MCF 10A (cell line): ENCODE measurements at regions of chr1 and their contacts with region 1.

Region 1: DNA sequence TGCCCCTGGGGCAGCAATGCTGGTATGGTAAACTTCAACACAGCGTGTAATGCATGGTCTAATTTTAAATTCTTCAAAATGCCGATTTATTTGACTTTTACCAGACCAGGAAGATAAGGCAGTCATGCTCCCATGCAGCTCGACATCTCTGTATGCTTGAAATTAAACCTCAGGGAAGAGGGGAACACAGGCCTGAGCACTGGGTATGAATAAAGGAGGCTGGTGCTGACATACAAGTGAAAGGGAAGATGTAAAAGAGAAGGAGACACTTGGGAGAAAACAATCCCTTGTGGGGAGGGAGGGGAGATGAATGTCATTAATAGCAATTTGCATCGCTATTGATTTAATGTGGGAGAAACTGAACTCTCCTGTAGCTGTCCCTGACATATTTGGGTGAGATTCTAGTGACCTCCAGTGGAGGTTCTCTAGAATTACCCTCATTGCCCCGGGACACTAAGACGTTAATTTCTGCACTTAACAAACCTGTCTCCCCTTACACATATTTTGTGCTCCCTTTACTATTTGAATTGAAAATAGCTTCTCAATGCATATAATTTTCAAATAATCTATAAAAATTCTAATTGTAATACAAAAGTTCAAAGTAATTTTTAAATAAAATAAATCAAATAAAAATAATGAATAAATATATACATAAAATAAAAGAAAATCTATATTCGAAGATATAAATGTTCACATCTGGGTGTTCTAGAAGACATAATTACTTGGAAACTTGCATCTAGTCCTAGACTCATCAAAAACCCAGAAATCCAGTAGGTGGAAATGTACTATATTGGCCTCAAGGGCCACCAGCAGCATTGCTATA is 283.1 kb downstream of the LMX1A start:
- DNase-seq: peak; percentile 80
- H3K4me3 Mint-ChIP-seq: no peak overlapping the region
- H3K27ac Mint-ChIP-seq: no peak overlapping the region
- H3K4me1 Mint-ChIP-seq: no peaks in the 10 kb centered on the region
- H3K27me3 Mint-ChIP-seq: no peaks in the 10 kb centered on the region
- CTCF ChIP-seq: peak; percentile 95

Region 2: GRCh38 chr1:163361123-163361934 is 1712.1 kb before region 1 on chr1:
- CTCF ChIA-PET with region 1: interaction called, 18 read pairs
- POLR2A ChIA-PET with region 1: interaction called, 3 read pairs
- intact Hi-C with region 1: loop called (anchors 1 kb)
- DNase-seq: peak; percentile 58
- H3K4me3 Mint-ChIP-seq: no peak overlapping the region
- H3K27ac Mint-ChIP-seq: no peak overlapping the region
- H3K4me1 Mint-ChIP-seq: no peaks in the 10 kb centered on the region
- H3K27me3 Mint-ChIP-seq: no peaks in the 10 kb centered on the region
- CTCF ChIP-seq: peak; percentile 65

Region 3: DNA sequence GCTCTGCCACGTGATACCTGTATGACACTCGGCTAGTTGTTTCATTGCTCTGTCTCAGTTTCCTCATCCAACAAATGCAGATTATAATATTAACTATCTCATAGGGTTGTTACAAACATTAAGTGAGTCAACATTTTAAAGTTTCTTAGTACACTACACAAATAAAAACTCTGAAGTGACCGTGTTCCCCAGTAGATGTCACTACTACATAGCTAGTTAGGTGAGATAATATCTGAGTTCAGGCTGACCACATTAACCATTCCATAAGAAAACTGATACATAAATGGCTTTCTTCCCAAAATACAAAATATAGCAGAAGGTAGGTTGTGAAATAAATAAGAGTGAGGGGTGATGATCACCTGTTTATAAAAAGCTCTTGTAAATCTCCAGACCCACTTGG is 1537.6 kb before region 1 on chr1:
- CTCF ChIA-PET with region 1: interaction called, 45 read pairs
- POLR2A ChIA-PET with region 1: no interaction called
- intact Hi-C with region 1: loop called (anchors 1 kb)
- DNase-seq: peak; percentile 60
- H3K4me3 Mint-ChIP-seq: no peak overlapping the region
- H3K27ac Mint-ChIP-seq: no peak overlapping the region
- H3K4me1 Mint-ChIP-seq: no peaks in the 10 kb centered on the region
- H3K27me3 Mint-ChIP-seq: peaks cover under 1% of the 10 kb centered on the region
- CTCF ChIP-seq: peak; percentile 47

Region 4: DNA sequence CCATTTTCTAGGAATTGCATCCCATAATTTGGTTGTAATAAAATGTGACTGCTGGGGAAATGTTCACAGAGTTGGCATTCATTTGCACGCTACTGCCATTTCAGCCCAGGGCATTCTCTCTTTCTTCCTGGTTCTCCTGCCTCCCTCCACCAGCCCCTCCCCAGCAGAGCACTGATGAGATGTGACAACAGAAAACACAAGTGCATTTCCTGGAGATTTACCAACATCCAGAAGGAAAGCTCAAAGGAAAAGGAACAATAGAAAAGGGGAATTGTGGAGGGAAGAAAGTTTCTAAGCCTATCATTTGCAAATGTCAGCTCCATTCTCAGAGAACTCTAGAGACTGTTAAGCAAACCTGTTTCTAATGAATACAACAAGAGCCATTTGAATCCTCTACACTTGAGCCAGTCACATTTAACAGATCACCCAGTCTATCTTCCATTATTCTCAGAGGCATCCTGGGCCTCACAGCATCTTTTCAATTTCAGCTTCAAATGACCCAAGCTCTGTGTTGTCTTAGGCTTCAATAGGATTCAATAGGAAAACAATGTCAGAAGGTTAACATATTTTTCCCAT is 910.0 kb before region 1 on chr1:
- CTCF ChIA-PET with region 1: interaction called, 3 read pairs
- POLR2A ChIA-PET with region 1: no interaction called
- intact Hi-C with region 1: loop called (anchors 1 kb)
- DNase-seq: no peak
- H3K4me3 Mint-ChIP-seq: no peak overlapping the region
- H3K27ac Mint-ChIP-seq: no peak overlapping the region
- H3K4me1 Mint-ChIP-seq: no peaks in the 10 kb centered on the region
- H3K27me3 Mint-ChIP-seq: no peaks in the 10 kb centered on the region
- CTCF ChIP-seq: no peak

Region 5: GRCh38 chr1:164794310-164794709 is 279.1 kb before region 1 on chr1:
- CTCF ChIA-PET with region 1: interaction called, 30 read pairs
- POLR2A ChIA-PET with region 1: interaction called, 4 read pairs
- intact Hi-C with region 1: loop called (anchors 1 kb)
- DNase-seq: peak; percentile 97
- H3K4me3 Mint-ChIP-seq: peak overlapping the region; percentile 3
- H3K27ac Mint-ChIP-seq: peak overlapping the region; percentile 41
- H3K4me1 Mint-ChIP-seq: peaks cover 17% of the 10 kb centered on the region
- H3K27me3 Mint-ChIP-seq: no peaks in the 10 kb centered on the region
- CTCF ChIP-seq: no peak

Region 6: GRCh38 chr1:165014753-165015152 is 58.6 kb before region 1 on chr1:
- CTCF ChIA-PET with region 1: no interaction called
- POLR2A ChIA-PET with region 1: no interaction called
- intact Hi-C with region 1: no loop called
- DNase-seq: no peak
- H3K4me3 Mint-ChIP-seq: no peak overlapping the region
- H3K27ac Mint-ChIP-seq: no peak overlapping the region
- H3K4me1 Mint-ChIP-seq: no peaks in the 10 kb centered on the region
- H3K27me3 Mint-ChIP-seq: no peaks in the 10 kb centered on the region
- CTCF ChIP-seq: no peak

Region 7: DNA sequence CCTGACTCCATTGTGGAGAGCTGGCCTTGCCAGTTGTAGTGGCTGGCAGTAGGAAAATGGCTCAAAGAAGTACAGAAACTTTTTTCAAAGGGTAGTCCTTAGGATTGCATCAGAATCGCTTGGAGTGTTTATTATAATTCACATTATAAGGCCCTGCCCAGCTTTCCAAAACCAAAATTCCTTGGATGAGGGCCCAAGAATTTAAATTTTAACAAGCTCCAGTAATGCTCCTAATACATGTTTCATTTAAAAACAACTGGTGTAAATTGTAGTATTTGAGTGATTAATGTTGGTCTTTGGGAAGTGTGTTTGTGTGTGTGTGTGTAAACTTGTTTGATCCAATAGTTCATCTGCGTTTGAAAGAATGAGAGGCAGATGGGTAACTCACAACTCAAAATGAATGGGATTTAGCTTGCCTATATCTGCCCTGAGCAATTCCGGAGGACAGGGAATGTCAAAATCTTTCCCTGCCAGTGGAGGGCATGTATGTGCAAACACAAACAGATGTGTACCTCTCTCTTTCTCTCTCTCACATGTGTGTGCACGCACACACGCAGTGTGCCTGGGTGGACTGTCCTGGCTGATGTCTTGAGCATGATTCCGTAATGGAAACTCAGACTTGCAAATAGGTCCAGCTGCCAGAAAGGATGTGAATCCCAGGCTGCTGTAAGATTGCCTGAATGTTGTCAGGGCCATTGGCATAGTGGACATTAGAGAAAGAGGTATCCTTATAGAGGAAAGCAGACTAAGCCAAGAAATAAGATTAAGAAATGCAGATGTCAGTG is 10.0 kb before region 1 on chr1:
- CTCF ChIA-PET with region 1: interaction called, 42 read pairs
- POLR2A ChIA-PET with region 1: no interaction called
- intact Hi-C with region 1: no loop called
- DNase-seq: no peak
- H3K4me3 Mint-ChIP-seq: no peak overlapping the region
- H3K27ac Mint-ChIP-seq: no peak overlapping the region
- H3K4me1 Mint-ChIP-seq: peaks cover 17% of the 10 kb centered on the region
- H3K27me3 Mint-ChIP-seq: no peaks in the 10 kb centered on the region
- CTCF ChIP-seq: no peak